ENCODE measurements at regions of chr4 and their contacts with region 1.

Region 1: DNA sequence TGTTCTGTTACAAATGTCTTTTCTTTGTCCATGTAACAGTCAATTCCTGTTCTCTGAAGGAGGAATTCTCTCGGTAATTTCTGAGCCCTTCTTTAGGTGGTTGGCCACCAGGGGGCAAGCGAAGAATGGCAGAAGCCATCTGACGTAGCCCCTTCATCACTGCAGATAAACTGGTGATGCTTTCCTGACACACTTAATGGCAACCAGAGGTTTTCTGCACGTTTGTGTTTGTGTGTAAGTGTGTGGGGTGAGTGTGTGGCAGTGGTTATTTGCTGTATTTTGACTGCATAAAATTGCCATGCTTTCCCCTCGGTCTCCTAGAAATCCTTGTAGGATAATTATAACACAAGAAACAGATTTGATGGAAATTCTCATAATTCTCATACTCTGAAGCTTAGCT is 64.8 kb upstream of the STOX2 start:
- DNase-seq: peak; percentile 77 to 92 (median 88)
- H3K4me3 ChIP-seq: peak overlapping the region in 10 of 59 donors; percentile 6 to 39 (median 19)
- H3K27ac ChIP-seq: no peak overlapping the region
- H3K27me3 ChIP-seq: no peaks in the 10 kb centered on the region
- CTCF ChIP-seq: peak; percentile 84 to 99 (median 96)

Region 2: GRCh38 chr4:183905081-183905592 is 64.8 kb after region 1 on chr4 and contains the start of gene STOX2:
- intact Hi-C with region 1: loop called (anchors 2 to 5 kb)
- DNase-seq: peak; percentile 72 to 91 (median 88)
- H3K4me3 ChIP-seq: peak within 1 kb of the TSS; percentile 56 to 92 (median 80)
- H3K27ac ChIP-seq: peak within 1 kb of the TSS; percentile 77 to 97 (median 94)
- H3K27me3 ChIP-seq: no peaks in the 10 kb centered on the region
- CTCF ChIP-seq: peak in 7 of 56 donors; percentile 1 to 18 (median 13)
- total RNA-seq, gene STOX2: 50.8 to 117 (median 73.3) TPM

Region 3: DNA sequence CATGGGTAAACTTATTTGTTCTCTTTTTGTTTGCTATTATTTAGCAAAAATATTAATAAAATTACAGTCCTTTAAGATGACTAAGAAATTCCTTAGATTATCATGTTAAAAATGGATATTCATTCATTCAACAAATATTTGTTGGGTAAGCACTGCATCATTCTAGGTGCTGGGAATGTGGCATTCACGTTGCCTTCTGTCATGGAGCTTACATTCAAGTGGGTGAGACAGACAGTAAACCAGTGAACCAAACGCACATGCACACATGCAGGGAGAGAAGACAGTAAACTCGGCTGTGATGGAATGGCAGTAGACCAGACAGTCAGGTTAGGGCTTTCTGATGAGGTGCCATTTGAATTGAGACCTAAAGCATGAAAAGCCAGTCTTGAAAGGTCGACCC is 156.6 kb after region 1 on chr4:
- intact Hi-C with region 1: loop called in 1 of 2 experiments (anchors 10 kb)
- DNase-seq: no peak
- H3K4me3 ChIP-seq: no peak overlapping the region
- H3K27ac ChIP-seq: no peak overlapping the region
- H3K27me3 ChIP-seq: no peaks in the 10 kb centered on the region
- CTCF ChIP-seq: no peak

Region 4: DNA sequence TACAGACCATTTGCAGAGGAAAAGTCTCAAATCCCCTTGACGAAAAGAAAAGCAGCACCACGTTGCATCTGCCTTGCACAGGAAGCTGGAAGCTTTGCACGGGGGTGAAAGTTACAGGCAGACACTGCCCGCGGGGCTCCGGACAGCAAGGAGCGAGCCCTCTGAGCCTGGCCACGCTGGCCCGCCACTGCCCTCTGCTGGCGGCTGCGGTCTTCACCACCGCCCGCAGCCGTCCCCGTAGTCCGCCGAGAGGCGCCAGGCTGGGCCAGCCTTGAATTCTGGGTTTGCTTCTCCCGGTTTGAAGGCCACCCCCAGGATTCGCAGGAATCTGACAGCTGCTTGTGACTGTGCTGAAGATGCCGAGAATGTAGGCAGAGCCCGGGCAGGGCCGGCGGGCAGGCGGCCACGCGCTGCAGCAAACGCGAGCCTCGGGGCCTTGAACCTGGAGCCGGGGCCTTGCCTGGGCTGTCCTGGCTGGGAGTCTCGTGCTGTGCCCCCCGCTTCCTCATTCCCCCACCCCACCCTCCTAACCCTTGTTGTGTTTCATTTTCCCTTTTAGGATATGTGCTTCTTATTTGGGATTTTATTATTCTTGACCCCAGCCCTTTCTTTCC is 328.2 kb after region 1 on chr4:
- intact Hi-C with region 1: loop called (anchors 1 to 2 kb)
- DNase-seq: peak; percentile 58 to 88 (median 74)
- H3K4me3 ChIP-seq: peak overlapping the region in 50 of 59 donors; percentile 6 to 52 (median 34)
- H3K27ac ChIP-seq: peak overlapping the region in 28 of 59 donors; percentile 7 to 72 (median 48)
- H3K27me3 ChIP-seq: no peaks in the 10 kb centered on the region
- CTCF ChIP-seq: peak; percentile 60 to 98 (median 95)

Region 5: GRCh38 chr4:184538023-184538599 is 697.8 kb after region 1 on chr4:
- intact Hi-C with region 1: loop called in 1 of 2 experiments (anchors 5 kb)
- DNase-seq: peak; percentile 61 to 93 (median 87)
- H3K4me3 ChIP-seq: peak overlapping the region; percentile 51 to 97 (median 82)
- H3K27ac ChIP-seq: peak overlapping the region; percentile 76 to 99 (median 96)
- H3K27me3 ChIP-seq: no peaks in the 10 kb centered on the region
- CTCF ChIP-seq: peak; percentile 23 to 89 (median 80)

Measured in dorsolateral prefrontal cortex (tissue), 120 donors.